Activated T-helper 2 cell treated with anti-CD3 and anti-CD28 coated beads, Interferon-gamma antibody, Interleukin-2, Interleukin-4, amounts not matched to agents 10 μg/mL and 5 μg/mL and 100 μg/mL, durations not matched to agents 14 hours and 24 hours and 36 hours (primary cell): ENCODE measurements at regions of chr5 and their contacts with region 1.

Region 1: GRCh38 chr5:132591145-132591544 is 34.4 kb downstream of the RAD50 start:
- DNase-seq: no peak
- H3K4me3 Mint-ChIP-seq: no peak overlapping the region
- H3K27ac Mint-ChIP-seq: no peak overlapping the region
- H3K4me1 Mint-ChIP-seq: peaks cover 21% of the 10 kb centered on the region
- H3K27me3 Mint-ChIP-seq: no peaks in the 10 kb centered on the region

Region 2: GRCh38 chr5:132802044-132802684 is 211.0 kb after region 1 on chr5:
- intact Hi-C with region 1: loop called (anchors 5 kb)
- DNase-seq: no peak
- H3K4me3 Mint-ChIP-seq: no peak overlapping the region
- H3K27ac Mint-ChIP-seq: no peak overlapping the region
- H3K4me1 Mint-ChIP-seq: peaks cover 5% of the 10 kb centered on the region
- H3K27me3 Mint-ChIP-seq: peaks cover 48% of the 10 kb centered on the region